ENCODE measurements at regions of chr11 and their contacts with region 1.

Region 1: DNA sequence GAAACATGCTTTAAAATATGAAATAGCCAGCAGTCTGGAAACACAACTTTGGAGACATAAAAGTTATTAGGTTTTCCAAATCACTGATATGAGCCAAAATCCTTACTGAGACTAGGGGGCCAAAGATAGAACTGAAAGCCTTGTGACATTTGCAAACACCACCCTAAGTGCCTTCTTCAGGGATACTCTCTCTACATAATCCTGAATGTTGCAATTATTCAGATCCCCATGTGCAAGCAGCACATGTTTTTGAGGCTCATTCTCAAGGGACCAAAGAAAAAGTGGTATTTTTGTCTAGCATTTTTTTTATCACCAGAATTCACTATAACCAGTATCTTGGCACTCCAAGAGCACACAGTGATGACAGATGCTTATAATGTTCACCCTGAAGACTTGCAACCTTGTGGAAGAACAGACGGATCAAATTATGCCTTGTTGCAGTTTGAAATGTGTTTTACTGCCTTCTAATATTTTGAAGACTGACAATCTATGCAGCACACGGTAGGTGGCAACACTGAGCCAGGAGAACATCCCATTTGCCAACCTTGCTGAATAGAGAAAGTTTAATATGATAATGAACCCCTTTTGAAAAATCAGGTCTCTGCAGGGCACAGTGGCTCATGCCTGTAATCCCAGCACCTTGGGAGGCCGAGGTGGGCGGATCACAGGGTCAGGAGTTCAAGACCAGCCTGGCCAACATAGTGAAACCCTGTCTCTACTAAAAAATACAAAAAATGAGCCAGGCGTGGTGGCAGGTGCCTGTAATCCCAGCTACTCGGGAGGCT is 78.5 kb downstream of the PLEKHA7 start:
- DNase-seq: no peak
- H3K4me3 ChIP-seq: no peak overlapping the region
- H3K27ac ChIP-seq: no peak overlapping the region
- H3K4me1 ChIP-seq: peaks cover 0 to 16% (median 6%) of the 10 kb centered on the region in 4 donors
- H3K27me3 ChIP-seq: no peaks in the 10 kb centered on the region
- CTCF ChIP-seq: peak in 3 of 4 experiments; percentile 21 to 55 (median 28)
- EP300 ChIP-seq: no peak
- POLR2A ChIP-seq: no peak

Region 2: DNA sequence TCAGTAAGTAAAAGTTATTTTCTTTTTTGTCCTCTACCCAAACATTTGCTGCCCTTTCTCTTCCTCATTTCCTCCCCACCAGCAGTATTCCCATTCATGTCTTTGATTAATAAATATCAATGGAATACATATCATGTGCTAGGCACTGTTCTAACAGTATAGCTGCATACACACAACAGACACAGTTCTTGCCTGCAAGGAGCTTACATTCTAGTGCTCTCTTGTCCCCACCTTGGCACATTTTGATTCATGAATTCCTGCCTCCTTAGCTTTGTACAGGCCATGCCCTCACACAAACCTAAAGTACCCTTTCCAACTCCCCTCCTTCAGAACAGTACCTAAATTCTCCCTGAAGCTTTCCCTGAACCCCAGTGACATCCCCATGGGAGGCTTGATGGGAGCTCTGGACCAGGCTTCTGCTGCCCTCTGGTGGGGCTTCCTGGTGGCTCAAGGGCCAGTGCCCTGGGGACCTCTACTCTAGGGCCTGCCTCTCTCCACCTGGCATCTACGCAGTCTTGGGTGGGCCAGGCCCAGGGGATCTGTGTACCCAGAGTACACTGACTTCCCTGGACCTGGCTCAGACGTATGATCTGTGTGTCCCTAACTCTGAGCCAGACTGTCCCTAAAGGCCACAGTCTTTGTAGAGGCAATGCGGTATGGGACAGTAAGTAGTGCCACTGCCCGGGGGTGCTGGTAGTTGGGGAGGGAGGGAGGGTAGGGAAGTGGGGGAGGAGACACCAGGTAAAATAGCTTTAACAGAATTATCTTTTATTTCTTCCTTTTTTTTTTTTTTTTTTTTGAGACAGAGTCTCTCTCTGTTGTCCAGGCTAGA is 127.7 kb after region 1 on chr11:
- intact Hi-C with region 1: loop called (anchors 5 kb)
- DNase-seq: no peak
- H3K4me3 ChIP-seq: no peak overlapping the region
- H3K27ac ChIP-seq: no peak overlapping the region
- H3K4me1 ChIP-seq: no peaks in the 10 kb centered on the region
- H3K27me3 ChIP-seq: no peaks in the 10 kb centered on the region
- CTCF ChIP-seq: peak; percentile 37 to 59 (median 46)
- EP300 ChIP-seq: no peak
- POLR2A ChIP-seq: no peak

Measured in sigmoid colon (tissue), 7 donors.